Ovary (tissue), 10 donors: ENCODE measurements at regions of chr3 and their contacts with region 1.

Region 1: DNA sequence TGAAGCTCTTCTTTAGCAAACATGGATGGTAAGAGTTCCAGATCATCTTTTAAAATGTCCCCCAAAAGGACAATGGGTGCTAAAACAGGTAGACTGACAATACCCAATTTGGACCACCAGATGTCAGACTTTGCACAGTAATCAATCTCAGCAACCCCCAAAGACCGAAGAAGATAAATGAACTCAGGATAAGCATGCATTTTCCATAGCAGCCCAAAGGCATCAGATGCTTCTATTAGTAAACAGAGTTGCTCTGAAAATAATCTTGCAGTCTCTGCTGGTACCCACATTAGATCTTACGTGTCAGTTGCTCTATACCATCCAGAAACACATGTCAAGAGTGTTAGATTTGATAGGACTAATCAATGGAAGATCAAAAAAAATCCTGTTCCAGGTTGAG is 20.6 kb downstream of the MYH15 start:
- DNase-seq: peak in 1 of 5 donors; percentile 18
- H3K4me3 ChIP-seq: no peak overlapping the region
- H3K27ac ChIP-seq: no peak overlapping the region
- H3K4me1 ChIP-seq: no peaks in the 10 kb centered on the region
- H3K27me3 ChIP-seq: no peaks in the 10 kb centered on the region
- CTCF ChIP-seq: peak in 2 of 3 donors; percentile 30 to 63
- EP300 ChIP-seq: no peak
- POLR2A ChIP-seq: no peak

Region 2: GRCh38 chr3:108546247-108546646 is 56.5 kb after region 1 on chr3:
- intact Hi-C with region 1: loop called (anchors 5 to 10 kb)
- DNase-seq: no peak
- H3K4me3 ChIP-seq: no peak overlapping the region
- H3K27ac ChIP-seq: no peak overlapping the region
- H3K4me1 ChIP-seq: no peaks in the 10 kb centered on the region
- H3K27me3 ChIP-seq: no peaks in the 10 kb centered on the region
- CTCF ChIP-seq: no peak
- EP300 ChIP-seq: no peak
- POLR2A ChIP-seq: no peak

Region 3: DNA sequence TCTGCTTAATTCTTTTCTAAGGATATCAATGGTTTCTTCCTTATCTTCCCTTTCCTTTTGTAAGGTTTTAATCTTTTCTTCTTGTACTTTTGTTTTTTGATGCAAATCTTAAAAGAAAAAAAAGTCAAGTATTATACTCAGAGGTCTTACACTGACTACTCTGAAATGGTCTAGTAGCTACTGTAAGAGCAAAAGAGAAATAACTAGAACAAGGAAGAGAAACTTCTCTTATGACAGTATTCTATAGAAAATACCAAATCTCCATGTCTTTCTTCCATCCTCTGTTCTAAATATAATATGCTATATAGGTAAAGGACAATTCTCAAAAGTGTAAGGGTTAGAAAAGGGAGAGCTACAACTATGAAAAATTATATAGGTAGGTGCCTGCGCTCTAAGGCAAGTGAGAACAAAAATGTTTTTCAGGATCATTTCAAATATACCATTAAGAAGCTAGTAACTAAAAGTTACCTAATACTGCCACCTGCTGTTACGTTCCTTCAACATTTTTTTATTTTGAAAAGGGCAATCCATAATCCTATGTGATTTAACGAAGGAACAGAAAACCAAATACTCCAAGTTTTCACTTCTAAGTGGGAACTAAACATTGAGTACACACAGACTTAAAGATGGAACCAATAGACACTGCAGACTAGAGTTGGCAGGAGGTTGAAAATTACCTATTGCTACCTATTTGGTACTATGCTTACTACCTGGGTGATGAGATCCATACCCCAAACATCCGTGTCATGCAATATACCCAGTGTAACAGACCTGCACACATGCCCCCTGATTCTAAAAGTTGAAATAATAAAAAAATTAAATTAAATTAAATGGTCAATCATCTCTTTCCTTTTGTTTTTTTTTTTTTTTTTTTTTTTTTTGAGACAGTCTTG is 62.7 kb after region 1 on chr3:
- intact Hi-C with region 1: loop called (anchors 5 to 10 kb)
- DNase-seq: no peak
- H3K4me3 ChIP-seq: no peak overlapping the region
- H3K27ac ChIP-seq: no peak overlapping the region
- H3K4me1 ChIP-seq: no peaks in the 10 kb centered on the region
- H3K27me3 ChIP-seq: no peaks in the 10 kb centered on the region
- CTCF ChIP-seq: peak in 1 of 3 donors; percentile 23
- EP300 ChIP-seq: no peak
- POLR2A ChIP-seq: no peak

Region 4: GRCh38 chr3:109195815-109196214 is 706.0 kb after region 1 on chr3:
- intact Hi-C with region 1: no loop called
- DNase-seq: no peak
- H3K4me3 ChIP-seq: no peak overlapping the region
- H3K27ac ChIP-seq: no peak overlapping the region
- H3K4me1 ChIP-seq: no peaks in the 10 kb centered on the region
- H3K27me3 ChIP-seq: no peaks in the 10 kb centered on the region
- CTCF ChIP-seq: no peak
- EP300 ChIP-seq: no peak
- POLR2A ChIP-seq: no peak